SK-N-SH (cell line): ENCODE measurements at regions of chr5 and their contacts with region 1.

Region 1: DNA sequence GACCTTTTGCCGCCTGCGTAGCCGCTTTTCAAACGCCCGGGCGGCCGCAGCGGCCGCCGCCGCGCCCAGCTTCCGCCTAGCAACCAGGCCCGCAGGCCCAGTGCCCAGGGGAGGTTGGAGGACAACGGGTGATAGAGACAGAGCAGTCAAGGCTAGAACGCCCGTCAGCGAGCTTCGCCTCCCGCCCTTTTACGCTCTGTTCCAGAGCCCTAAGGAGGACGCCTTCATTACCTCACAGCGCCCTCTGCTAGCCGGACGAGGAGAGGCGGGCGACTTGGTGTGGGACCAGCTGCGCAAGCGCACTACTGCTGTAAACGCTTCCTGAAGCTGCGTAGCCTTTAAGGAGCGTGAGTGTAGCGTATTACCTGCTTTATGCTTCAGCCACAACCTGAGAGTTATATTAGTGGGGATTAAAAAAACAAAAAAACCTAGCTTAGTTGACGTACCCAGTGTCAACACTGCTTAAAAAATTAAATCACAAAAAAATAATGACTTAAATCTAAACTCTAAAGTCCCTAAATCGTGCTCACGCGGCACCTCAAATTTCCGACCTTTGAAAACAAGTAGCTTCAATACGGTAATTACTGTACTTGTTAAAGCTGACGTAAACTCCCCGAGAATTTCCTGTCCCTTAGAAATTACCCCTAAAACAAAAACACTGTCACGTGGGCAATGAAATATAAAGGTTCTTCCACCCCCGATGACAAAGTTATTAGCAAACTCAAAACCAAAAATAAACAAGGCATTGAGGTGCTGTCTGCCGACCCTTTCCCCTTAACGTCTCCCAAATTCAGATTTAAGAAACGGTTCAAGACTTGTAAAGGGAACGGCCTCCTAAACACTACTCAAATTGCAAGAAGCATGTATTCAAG is at the start of gene CEP120:
- DNase-seq: peak; percentile 95
- H3K4me3 ChIP-seq: peak within 1 kb of the TSS; percentile 72 to 91
- H3K27ac ChIP-seq: peak within 1 kb of the TSS; percentile 66 to 89
- H3K4me1 ChIP-seq: peaks cover 10 to 11% of the 10 kb centered on the region in 2 experiments; a peak in 3 of 4 replicates
- H3K27me3 ChIP-seq: no peaks in the 10 kb centered on the region
- CTCF ChIP-seq: peak; percentile 80
- EP300 ChIP-seq: peak; percentile 42 to 48; a peak in 3 of 4 replicates
- RAD21 ChIP-seq: peak; percentile 65
- polyA plus RNA-seq, gene CEP120: 5.0 and 7.0 TPM in 2 replicates

Region 2: DNA sequence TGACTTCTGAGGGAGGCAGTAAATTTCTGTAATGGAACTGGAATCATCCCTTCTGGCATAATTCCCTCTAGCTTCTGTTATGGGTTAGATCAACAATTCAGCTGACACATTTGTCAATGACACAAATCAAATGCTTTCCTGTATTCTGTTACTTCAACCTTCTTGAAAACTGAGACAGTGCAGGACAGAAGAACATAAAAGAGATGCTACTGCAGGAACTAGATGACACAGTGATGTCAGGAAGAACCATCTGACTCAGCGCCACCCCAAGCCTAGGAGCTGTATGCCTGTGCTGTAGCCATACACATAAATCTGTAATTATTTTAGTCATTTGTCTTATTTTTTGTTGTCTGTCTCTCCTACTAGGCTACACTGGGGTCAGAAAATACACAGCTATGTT is 17.9 kb after region 1 on chr5:
- CTCF ChIA-PET with region 1: interaction called, 15 read pairs
- POLR2A ChIA-PET with region 1: interaction called, 5 read pairs
- DNase-seq: no peak
- H3K4me3 ChIP-seq: no peak overlapping the region
- H3K27ac ChIP-seq: no peak overlapping the region
- H3K4me1 ChIP-seq: peaks cover 0 to 3% of the 10 kb centered on the region in 2 experiments; a peak in 1 of 4 replicates
- H3K27me3 ChIP-seq: no peaks in the 10 kb centered on the region
- CTCF ChIP-seq: no peak
- EP300 ChIP-seq: no peak
- RAD21 ChIP-seq: no peak

Region 3: DNA sequence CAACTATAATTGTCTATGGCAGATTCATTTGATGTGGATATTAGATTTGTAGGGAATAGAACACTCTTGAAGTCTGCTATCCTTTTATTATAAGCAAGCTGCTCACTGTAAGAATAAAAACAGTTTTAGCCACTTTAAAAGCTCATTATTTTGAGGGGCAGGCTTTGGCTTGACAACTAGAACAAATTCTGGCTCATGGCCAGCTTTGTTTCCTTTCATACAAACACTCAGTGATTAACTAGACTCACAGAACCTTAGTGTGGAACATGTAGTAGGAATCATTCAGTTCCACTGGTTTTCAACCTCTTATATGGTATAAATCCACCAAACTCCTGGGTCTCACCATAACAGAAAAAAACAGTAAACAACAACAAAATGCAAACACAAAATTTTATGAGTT is 27.1 kb after region 1 on chr5:
- CTCF ChIA-PET with region 1: interaction called, 17 read pairs
- POLR2A ChIA-PET with region 1: interaction called, 5 read pairs
- DNase-seq: no peak
- H3K4me3 ChIP-seq: no peak overlapping the region
- H3K27ac ChIP-seq: peak overlapping the region in 1 of 2 experiments; percentile 96; a peak in 2 of 4 replicates
- H3K4me1 ChIP-seq: peaks cover 19 to 21% of the 10 kb centered on the region in 2 experiments; a peak in 3 of 4 replicates
- H3K27me3 ChIP-seq: no peaks in the 10 kb centered on the region
- CTCF ChIP-seq: no peak
- EP300 ChIP-seq: no peak
- RAD21 ChIP-seq: no peak

Region 4: GRCh38 chr5:123511648-123512605 is 88.4 kb after region 1 on chr5 and contains the start of gene CSNK1G3:
- CTCF ChIA-PET with region 1: interaction called, 13 read pairs
- POLR2A ChIA-PET with region 1: interaction called, 28 read pairs
- DNase-seq: peak; percentile 91
- H3K4me3 ChIP-seq: peak within 1 kb of the TSS; percentile 63 to 82
- H3K27ac ChIP-seq: peak within 1 kb of the TSS; percentile 82 to 96
- H3K4me1 ChIP-seq: peaks cover 0 to 16% of the 10 kb centered on the region in 2 experiments; a peak in 3 of 4 replicates
- H3K27me3 ChIP-seq: no peaks in the 10 kb centered on the region
- CTCF ChIP-seq: no peak
- EP300 ChIP-seq: no peak; a peak in 1 of 4 replicates
- RAD21 ChIP-seq: peak; percentile 2; the same call in 1 of the 2 replicates
- polyA plus RNA-seq, gene CSNK1G3: 12.9 and 13.1 TPM in 2 replicates

Region 5: GRCh38 chr5:123605822-123606221 is 182.3 kb after region 1 on chr5:
- CTCF ChIA-PET with region 1: interaction called, 45 read pairs
- POLR2A ChIA-PET with region 1: interaction called, 3 read pairs
- DNase-seq: no peak
- H3K4me3 ChIP-seq: no peak overlapping the region
- H3K27ac ChIP-seq: no peak overlapping the region
- H3K4me1 ChIP-seq: no peaks in the 10 kb centered on the region
- H3K27me3 ChIP-seq: no peaks in the 10 kb centered on the region
- CTCF ChIP-seq: no peak
- EP300 ChIP-seq: no peak
- RAD21 ChIP-seq: no peak

Region 6: DNA sequence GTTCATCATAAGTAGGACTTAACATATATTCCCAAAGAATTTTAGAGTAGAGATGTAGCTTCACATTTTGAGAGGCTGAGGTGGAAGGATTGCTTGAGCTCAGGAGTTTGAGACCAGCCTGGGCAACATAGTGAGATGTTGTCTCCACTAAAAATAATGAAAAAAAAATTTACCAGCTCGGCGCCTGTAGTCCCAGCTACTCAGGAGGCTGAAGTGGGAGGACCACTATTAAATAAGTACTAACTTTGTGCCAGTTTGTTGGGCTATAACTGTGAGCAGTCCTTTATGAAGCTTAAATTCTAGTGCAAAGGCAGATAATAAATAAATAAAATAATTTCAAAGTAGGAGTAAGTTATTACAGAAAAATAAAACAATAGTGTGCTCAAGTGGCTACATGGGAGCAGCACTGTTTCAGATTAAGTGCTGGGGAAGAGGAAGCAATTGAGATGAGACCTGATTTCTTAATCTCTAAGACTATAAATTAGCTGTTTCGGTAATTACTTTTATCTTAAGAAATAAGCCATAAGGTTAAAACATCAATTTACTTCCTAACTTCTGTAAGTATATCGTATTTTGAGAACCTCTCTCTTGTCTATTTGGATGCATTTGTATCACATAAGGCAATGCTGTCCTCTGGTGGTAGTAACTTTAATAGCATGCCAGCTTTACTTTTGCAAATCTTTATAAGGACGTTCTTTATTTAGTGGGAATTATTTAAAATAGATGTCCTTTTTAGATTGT is 187.3 kb after region 1 on chr5:
- CTCF ChIA-PET with region 1: interaction called, 45 read pairs
- POLR2A ChIA-PET with region 1: interaction called, 3 read pairs
- DNase-seq: peak; percentile 23
- H3K4me3 ChIP-seq: no peak overlapping the region
- H3K27ac ChIP-seq: no peak overlapping the region
- H3K4me1 ChIP-seq: no peaks in the 10 kb centered on the region
- H3K27me3 ChIP-seq: no peaks in the 10 kb centered on the region
- CTCF ChIP-seq: peak; percentile 99
- EP300 ChIP-seq: no peak
- RAD21 ChIP-seq: peak; percentile 94